IMR-90 (cell line): ENCODE measurements at regions of chr17 and their contacts with region 1.

Region 1: DNA sequence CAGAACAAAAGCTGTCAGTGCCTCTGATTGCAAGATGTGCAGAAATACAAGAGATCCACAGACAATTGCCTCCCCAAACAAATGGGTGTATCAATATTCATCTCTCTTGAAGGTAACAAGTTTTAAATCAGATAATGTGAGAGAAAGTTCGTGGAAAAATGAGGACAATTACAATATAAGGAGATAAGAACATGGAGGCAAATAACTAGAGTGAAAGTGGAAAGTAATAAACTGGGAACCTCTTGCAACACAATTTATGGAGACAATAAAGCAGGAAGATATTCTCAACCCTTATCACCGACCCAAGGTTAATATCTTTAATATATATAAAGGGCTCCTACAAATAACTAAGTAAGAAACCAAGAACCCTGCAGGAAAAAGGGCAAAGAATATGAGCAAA is 14.2 kb upstream of the KRT19 start:
- DNase-seq: no peak
- ATAC-seq: no peak
- H3K4me3 ChIP-seq: no peak overlapping the region
- H3K27ac ChIP-seq: no peak overlapping the region
- H3K4me1 ChIP-seq: peaks cover 20% of the 10 kb centered on the region
- H3K27me3 ChIP-seq: no peaks in the 10 kb centered on the region
- CTCF ChIP-seq: no peak
- POLR2A ChIP-seq: no peak
- RAD21 ChIP-seq: no peak

Region 2: DNA sequence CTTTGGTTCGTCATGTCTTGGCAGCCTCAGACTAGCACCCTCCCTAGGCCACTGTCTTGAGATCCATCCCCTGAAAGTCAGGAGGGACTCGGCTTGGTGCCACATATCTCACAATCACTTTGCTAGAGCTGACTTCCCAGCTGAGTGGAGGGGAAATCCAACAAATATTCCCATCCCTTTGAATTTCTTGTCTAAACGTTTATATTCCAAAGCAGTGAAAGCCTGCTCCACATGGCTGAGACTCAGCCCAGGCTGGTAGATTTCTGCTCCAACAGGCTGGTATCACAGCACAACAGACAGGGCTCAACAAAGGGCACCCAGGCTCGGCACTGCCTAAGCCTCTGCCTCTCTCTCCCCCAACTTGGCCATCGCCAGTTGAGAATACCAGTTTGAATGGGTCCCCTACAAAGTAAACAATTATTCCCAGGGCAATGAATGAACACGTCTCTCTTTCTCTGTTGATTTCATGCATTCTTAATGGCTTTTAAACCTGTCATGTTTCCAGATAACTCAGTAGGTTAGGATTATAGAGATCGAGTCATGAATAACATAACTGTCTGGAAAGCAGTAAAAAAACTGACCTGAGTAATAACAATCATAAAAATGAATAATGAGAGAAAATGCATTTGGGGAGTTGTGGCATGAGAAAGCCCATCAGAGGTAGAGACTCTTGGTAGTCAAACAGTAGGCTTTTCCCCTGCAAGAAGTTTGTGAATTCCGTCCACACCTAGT is 37.9 kb before region 1 on chr17:
- CTCF ChIA-PET with region 1: no interaction called
- POLR2A ChIA-PET with region 1: no interaction called
- dilution Hi-C with region 1: no loop called
- in situ Hi-C with region 1: no loop called
- intact Hi-C with region 1: loop called (anchors 1 kb)
- DNase-seq: peak; percentile 69
- ATAC-seq: peak; percentile 67
- H3K4me3 ChIP-seq: no peak overlapping the region
- H3K27ac ChIP-seq: peak overlapping the region; percentile 22; the same call in 1 of the 2 replicates
- H3K4me1 ChIP-seq: peaks cover 16% of the 10 kb centered on the region
- H3K27me3 ChIP-seq: no peaks in the 10 kb centered on the region; the same call in 1 of the 2 replicates
- CTCF ChIP-seq: no peak
- POLR2A ChIP-seq: no peak
- RAD21 ChIP-seq: no peak

Region 3: DNA sequence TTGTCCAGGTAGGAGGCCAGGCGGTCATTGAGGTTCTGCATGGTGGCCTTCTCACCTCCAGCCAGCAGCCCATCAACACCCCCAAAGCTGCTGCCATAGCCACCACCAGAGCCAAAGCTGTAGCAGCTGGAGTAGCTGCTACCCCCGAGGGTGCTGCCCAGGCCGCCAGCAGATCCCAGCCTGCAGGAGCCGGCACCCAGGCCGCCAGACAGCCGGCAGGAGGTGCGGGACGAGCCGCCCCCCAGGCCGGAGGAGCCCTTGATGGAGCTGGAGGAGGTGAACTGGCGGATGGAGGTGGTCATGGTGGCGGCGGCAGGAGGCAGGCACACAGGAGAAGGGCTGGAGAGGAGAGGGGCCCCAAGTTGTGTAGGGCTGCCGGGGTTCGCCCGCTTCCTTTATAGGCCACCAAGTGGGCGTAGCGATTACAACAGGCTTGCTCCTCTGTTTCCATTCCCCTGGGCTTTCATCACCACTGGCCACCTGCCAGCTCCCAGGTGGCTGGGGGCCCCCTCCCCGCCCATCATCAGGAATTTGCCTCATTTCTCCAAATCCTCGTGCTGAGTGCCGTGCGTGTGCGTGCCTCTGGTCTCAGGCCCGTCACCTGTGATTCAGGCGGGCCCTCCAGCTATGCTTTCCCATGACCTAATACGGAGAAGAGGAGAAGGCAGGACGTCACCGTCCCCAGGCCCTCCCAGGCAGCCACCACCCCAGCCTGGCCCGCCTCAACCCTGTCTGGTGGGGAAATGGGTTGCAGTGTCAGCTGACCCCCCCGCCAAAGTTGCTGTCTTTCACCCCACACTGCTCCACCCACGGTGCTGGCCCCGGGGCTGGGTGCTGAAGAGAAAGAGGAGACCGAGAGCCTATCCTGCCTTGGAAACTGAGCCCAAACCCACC is 82.1 kb after region 1 on chr17 and contains the start of gene KRT17:
- CTCF ChIA-PET with region 1: no interaction called
- POLR2A ChIA-PET with region 1: no interaction called
- dilution Hi-C with region 1: no loop called
- in situ Hi-C with region 1: no loop called
- intact Hi-C with region 1: no loop called
- DNase-seq: no peak
- ATAC-seq: no peak
- H3K4me3 ChIP-seq: no peak within 1 kb of the TSS
- H3K27ac ChIP-seq: no peak within 1 kb of the TSS
- H3K4me1 ChIP-seq: no peaks in the 10 kb centered on the region
- H3K27me3 ChIP-seq: peaks cover 26% of the 10 kb centered on the region
- CTCF ChIP-seq: no peak
- POLR2A ChIP-seq: no peak
- RAD21 ChIP-seq: no peak
- total RNA-seq, gene KRT17: 2.5 TPM in 2 replicates

Region 4: DNA sequence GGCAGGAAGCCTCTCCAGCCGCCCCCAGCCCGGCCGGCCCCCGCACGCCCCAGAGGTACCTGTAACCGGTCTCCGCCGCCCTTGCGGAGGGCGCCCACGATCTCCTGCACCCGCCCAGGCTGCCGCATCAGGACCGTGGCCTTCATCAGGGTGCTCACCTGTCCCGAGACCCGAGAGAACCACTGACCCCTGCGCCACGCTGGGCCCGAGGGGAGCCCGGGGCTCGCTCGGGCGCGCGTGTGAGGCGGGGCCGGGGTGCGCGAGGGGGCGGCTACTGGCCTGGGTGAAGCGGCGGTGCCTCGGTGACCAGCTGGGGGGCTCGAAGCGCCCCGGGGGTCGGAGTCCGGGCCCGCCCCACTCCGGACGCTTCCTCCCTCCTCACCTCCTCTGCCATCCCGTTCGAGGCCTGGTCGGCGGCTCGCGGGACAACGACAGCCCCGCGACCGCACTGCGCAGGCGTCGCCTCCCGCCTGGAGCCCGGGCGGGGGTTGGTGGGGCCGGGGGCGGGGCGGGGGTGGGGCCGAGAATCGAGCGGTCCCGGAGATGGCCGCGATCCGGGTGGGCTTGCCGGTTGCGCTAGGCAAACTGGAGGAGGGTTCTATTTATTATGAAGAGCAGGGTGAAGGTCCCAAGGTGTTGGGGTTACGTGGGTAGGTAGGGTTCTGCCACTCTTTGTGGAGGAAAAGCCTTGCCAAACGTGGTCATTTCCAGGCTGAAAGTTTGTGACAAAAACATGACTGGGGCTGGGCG is 293.6 kb after region 1 on chr17 and contains the start of gene NT5C3B:
- CTCF ChIA-PET with region 1: no interaction called
- POLR2A ChIA-PET with region 1: no interaction called
- dilution Hi-C with region 1: no loop called
- in situ Hi-C with region 1: no loop called
- intact Hi-C with region 1: no loop called
- DNase-seq: no peak
- ATAC-seq: peak; percentile 94
- H3K4me3 ChIP-seq: peak within 1 kb of the TSS; percentile 96
- H3K27ac ChIP-seq: peak within 1 kb of the TSS; percentile 64
- H3K4me1 ChIP-seq: peaks cover 10% of the 10 kb centered on the region
- H3K27me3 ChIP-seq: no peaks in the 10 kb centered on the region
- CTCF ChIP-seq: no peak
- POLR2A ChIP-seq: no peak
- RAD21 ChIP-seq: no peak
- total RNA-seq, gene NT5C3B: 83.0 and 92.7 TPM in 2 replicates